ENCODE measurements at regions of chr5 and their contacts with region 1.

Region 1: GRCh38 chr5:149544028-149544420 is 7.2 kb downstream of the CSNK1A1 start:
- DNase-seq: no peak
- ATAC-seq: no peak
- H3K4me3 ChIP-seq: no peak overlapping the region
- H3K4me3 Mint-ChIP-seq: no peak overlapping the region
- H3K27ac ChIP-seq: no peak overlapping the region
- H3K27ac Mint-ChIP-seq: peak overlapping the region; percentile 16
- H3K4me1 ChIP-seq: peaks cover 54% of the 10 kb centered on the region
- H3K4me1 Mint-ChIP-seq: peaks cover 78% of the 10 kb centered on the region
- H3K27me3 ChIP-seq: no peaks in the 10 kb centered on the region
- H3K27me3 Mint-ChIP-seq: no peaks in the 10 kb centered on the region
- CTCF ChIP-seq: no peak

Region 2: GRCh38 chr5:149504677-149505076 is 39.3 kb before region 1 on chr5:
- CTCF ChIA-PET with region 1: no interaction called
- POLR2A ChIA-PET with region 1: no interaction called
- intact Hi-C with region 1: loop called (anchors 5 kb)
- DNase-seq: no peak
- ATAC-seq: no peak
- H3K4me3 ChIP-seq: no peak overlapping the region
- H3K4me3 Mint-ChIP-seq: no peak overlapping the region
- H3K27ac ChIP-seq: no peak overlapping the region
- H3K27ac Mint-ChIP-seq: peak overlapping the region; percentile 7
- H3K4me1 ChIP-seq: no peaks in the 10 kb centered on the region
- H3K4me1 Mint-ChIP-seq: peaks cover 16% of the 10 kb centered on the region
- H3K27me3 ChIP-seq: no peaks in the 10 kb centered on the region
- H3K27me3 Mint-ChIP-seq: no peaks in the 10 kb centered on the region
- CTCF ChIP-seq: no peak

Region 3: DNA sequence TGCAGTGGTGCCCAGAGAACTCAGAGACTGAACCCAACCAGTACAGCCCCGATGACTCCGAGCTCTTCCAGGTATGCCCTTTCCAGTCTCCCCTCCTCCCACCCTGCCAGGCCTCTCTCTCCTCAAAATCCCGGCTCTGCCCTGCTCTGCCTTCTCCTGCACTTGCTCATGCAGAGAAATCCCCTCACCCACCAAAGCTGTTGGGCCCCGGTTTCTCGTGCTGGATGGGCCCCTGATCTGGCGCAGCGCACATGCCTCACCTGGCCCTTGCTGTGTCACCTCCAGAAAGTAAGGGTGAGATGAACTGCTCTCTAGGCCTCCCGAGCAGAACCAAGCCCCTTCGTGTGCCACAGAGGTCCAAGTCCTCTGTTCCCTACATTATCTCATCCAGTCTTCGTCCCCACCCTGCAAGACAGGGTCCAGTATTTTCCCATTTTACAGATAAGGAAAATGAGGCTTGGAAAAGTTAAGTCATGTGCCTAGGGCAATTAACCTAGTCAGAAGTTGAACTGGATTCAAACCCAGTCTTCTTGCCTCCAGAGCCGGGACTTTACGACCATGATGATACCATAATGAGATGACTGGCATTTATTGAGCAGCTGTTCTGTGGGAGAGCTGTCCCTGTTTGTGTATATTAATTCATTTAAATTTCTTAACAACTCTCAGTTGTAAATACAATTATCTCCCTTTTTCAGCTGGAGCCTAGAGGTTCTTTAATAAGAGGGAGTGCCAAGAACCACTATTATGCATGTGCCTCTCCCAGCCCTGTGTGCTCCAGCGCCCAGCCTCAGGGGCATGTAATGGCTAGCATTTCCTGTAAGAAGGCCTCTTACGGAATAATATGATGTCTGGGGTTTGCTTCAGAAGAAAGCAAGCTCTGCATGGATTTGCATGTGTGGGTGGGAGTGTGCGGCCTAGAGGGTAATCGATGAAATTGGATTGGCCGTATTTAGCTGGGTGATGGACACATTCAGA is 276.8 kb after region 1 on chr5:
- CTCF ChIA-PET with region 1: no interaction called
- POLR2A ChIA-PET with region 1: no interaction called
- intact Hi-C with region 1: no loop called
- DNase-seq: no peak
- ATAC-seq: no peak
- H3K4me3 ChIP-seq: no peak overlapping the region
- H3K4me3 Mint-ChIP-seq: no peak overlapping the region
- H3K27ac ChIP-seq: no peak overlapping the region
- H3K27ac Mint-ChIP-seq: no peak overlapping the region
- H3K4me1 ChIP-seq: no peaks in the 10 kb centered on the region
- H3K4me1 Mint-ChIP-seq: no peaks in the 10 kb centered on the region
- H3K27me3 ChIP-seq: no peaks in the 10 kb centered on the region
- H3K27me3 Mint-ChIP-seq: no peaks in the 10 kb centered on the region
- CTCF ChIP-seq: no peak

Measured in CD4-positive, alpha-beta T cell (primary cell).